ENCODE measurements at regions of chr3 and their contacts with region 1.

Region 1: GRCh38 chr3:39279745-39280517 is at the start of gene CX3CR1:
- DNase-seq: peak in 1 of 2 donors; percentile 33
- ATAC-seq: peak; percentile 39 to 72 (median 60)
- H3K4me3 ChIP-seq: peak within 1 kb of the TSS; percentile 68
- H3K4me3 Mint-ChIP-seq: peak within 1 kb of the TSS; percentile 98
- H3K27ac ChIP-seq: peak within 1 kb of the TSS; percentile 69
- H3K27ac Mint-ChIP-seq: peak within 1 kb of the TSS; percentile 91 to 92
- H3K4me1 ChIP-seq: peaks cover 66% of the 10 kb centered on the region
- H3K4me1 Mint-ChIP-seq: peaks cover 84% of the 10 kb centered on the region in 2 donors
- H3K27me3 ChIP-seq: no peaks in the 10 kb centered on the region
- H3K27me3 Mint-ChIP-seq: no peaks in the 10 kb centered on the region
- CTCF ChIP-seq: no peak
- total RNA-seq, gene CX3CR1: 203 to 459 (median 405) TPM

Region 2: DNA sequence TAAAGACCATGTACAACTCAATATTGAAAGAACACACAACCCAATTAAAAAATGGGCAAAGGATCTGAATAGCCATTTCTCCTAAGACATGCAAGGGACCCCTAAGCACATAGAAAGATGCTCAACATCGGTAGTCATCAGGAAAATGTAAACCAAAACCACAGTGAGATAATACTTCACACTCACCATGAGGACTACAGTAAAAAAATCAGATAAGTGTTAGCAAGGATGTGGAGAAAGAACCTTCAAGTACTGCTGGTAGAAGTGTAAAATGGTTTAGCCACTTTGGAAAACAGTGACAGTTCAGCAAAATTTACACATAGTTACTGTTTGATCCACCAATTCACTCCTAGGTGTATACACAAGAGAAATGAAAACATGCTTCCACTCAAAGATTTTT is 57.5 kb before region 1 on chr3:
- intact Hi-C with region 1: loop called (anchors 2 kb)
- DNase-seq: peak in 1 of 2 donors; percentile 48
- ATAC-seq: peak; percentile 71 to 88 (median 85)
- H3K4me3 ChIP-seq: no peak overlapping the region
- H3K4me3 Mint-ChIP-seq: peak overlapping the region; percentile 89
- H3K27ac ChIP-seq: peak overlapping the region; percentile 47
- H3K27ac Mint-ChIP-seq: peak overlapping the region; percentile 86 to 89
- H3K4me1 ChIP-seq: peaks cover 32% of the 10 kb centered on the region
- H3K4me1 Mint-ChIP-seq: peaks cover 78 to 84% of the 10 kb centered on the region in 2 donors
- H3K27me3 ChIP-seq: no peaks in the 10 kb centered on the region
- H3K27me3 Mint-ChIP-seq: no peaks in the 10 kb centered on the region
- CTCF ChIP-seq: no peak

Region 3: DNA sequence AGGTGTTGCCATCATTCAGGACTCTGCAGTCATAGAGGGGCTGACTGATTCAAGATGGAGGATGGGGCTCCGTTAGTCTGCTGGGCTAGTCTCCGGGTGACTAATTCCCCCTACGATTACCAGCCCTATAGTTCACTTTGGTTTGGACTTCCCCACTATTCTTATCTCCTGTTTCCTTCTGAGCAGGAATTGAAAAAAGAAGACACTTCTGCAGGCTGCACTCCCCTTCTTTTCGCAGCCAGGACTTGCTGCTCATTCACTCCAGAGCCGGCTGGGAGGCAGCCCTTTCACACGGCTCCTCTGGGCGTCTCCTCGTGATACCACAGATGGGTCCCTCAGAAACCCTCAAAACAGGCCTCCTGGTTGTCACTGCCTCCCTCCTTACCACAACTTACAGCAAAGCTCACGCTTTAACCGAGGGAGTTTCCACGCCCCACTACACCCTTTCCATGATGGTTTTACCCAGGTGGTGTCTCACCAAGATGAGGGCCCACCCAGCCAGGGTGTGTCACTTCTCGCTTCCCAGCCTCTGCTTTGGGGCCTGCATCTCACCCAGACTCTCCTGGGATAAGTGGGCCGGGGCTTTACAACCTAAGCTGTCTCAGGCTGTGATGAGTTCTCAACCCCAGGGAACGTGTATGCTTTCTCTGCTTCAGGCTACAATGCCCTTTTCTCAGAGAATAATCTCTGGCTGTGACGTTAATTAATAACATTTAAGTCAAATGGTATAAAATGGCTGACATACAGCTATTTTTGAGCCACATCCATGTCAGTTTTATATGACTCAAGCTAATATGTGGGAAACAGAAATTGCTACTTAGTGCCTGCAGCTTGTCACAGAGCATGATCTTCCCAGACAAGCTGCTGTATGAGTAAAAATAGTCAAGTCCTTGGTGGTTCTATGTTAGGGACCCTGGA is 12.0 kb before region 1 on chr3:
- intact Hi-C with region 1: loop called (anchors 1 kb)
- DNase-seq: peak; percentile 83 to 91
- ATAC-seq: peak; percentile 69 to 89 (median 88)
- H3K4me3 ChIP-seq: no peak overlapping the region
- H3K4me3 Mint-ChIP-seq: peak overlapping the region; percentile 81
- H3K27ac ChIP-seq: peak overlapping the region; percentile 90
- H3K27ac Mint-ChIP-seq: peak overlapping the region; percentile 91 to 92
- H3K4me1 ChIP-seq: peaks cover 86% of the 10 kb centered on the region
- H3K4me1 Mint-ChIP-seq: peaks cover 95 to 98% of the 10 kb centered on the region in 2 donors
- H3K27me3 ChIP-seq: no peaks in the 10 kb centered on the region
- H3K27me3 Mint-ChIP-seq: no peaks in the 10 kb centered on the region
- CTCF ChIP-seq: no peak

Region 4: GRCh38 chr3:39327746-39328349 is 47.9 kb after region 1 on chr3:
- intact Hi-C with region 1: no loop called
- DNase-seq: peak in 1 of 2 donors; percentile 55
- ATAC-seq: no peak
- H3K4me3 ChIP-seq: no peak overlapping the region
- H3K4me3 Mint-ChIP-seq: no peak overlapping the region
- H3K27ac ChIP-seq: no peak overlapping the region
- H3K27ac Mint-ChIP-seq: no peak overlapping the region
- H3K4me1 ChIP-seq: peaks cover 12% of the 10 kb centered on the region
- H3K4me1 Mint-ChIP-seq: peaks cover 12 to 24% of the 10 kb centered on the region in 2 donors
- H3K27me3 ChIP-seq: no peaks in the 10 kb centered on the region
- H3K27me3 Mint-ChIP-seq: no peaks in the 10 kb centered on the region
- CTCF ChIP-seq: no peak

Region 5: GRCh38 chr3:39361252-39361927 is 81.5 kb after region 1 on chr3:
- intact Hi-C with region 1: no loop called
- DNase-seq: peak; percentile 46 to 72
- ATAC-seq: peak; percentile 83 to 93 (median 90)
- H3K4me3 ChIP-seq: peak overlapping the region; percentile 19
- H3K4me3 Mint-ChIP-seq: peak overlapping the region; percentile 78
- H3K27ac ChIP-seq: peak overlapping the region; percentile 90
- H3K27ac Mint-ChIP-seq: peak overlapping the region; percentile 69 to 90
- H3K4me1 ChIP-seq: peaks cover 45% of the 10 kb centered on the region
- H3K4me1 Mint-ChIP-seq: peaks cover 51 to 68% of the 10 kb centered on the region in 2 donors
- H3K27me3 ChIP-seq: no peaks in the 10 kb centered on the region
- H3K27me3 Mint-ChIP-seq: no peaks in the 10 kb centered on the region
- CTCF ChIP-seq: no peak

Region 6: DNA sequence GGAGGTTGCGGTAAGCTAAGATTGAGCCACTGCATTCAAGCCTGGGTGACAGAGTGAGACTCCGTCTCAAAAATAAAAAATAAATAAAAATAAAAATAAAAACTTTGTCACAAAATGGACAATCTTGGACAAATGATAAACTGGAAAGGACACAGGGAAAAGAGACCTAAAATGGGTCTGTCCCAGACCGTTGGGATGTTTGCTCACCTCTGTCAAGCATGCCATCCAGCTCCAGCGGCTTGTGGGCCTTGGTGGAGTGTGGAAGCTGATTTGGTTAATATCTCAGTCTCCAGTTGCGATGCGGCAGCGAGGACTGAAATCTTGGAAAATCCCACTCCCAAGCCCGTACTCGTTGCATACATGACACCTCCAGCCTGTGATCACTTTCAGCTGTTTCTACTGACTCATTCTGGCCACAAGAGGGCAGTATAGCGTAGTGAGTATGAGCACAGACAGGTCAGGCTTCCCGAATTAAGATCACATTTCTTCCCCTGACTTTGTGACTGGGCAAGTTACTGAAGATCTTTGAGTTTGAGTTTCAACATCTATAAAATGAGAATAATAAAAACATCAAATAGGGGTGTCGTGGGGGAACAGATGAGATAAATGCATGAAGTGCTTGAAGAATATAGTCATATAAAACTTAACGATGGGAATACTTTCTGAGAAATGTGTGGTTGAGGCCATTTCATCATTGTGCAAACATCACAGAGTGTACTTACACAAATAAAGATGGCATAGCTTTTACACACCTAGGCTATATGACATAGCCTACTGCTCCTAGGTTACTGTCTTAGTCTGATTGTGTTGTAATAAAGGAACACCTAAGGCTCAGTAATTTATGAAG is 167.9 kb after region 1 on chr3:
- intact Hi-C with region 1: no loop called
- DNase-seq: peak; percentile 17 to 88
- ATAC-seq: peak; percentile 82 to 96 (median 83)
- H3K4me3 ChIP-seq: no peak overlapping the region
- H3K4me3 Mint-ChIP-seq: no peak overlapping the region
- H3K27ac ChIP-seq: no peak overlapping the region
- H3K27ac Mint-ChIP-seq: no peak overlapping the region
- H3K4me1 ChIP-seq: peaks cover 3% of the 10 kb centered on the region
- H3K4me1 Mint-ChIP-seq: peaks cover 0 to 4% of the 10 kb centered on the region in 2 donors
- H3K27me3 ChIP-seq: no peaks in the 10 kb centered on the region
- H3K27me3 Mint-ChIP-seq: peaks cover 3 to 19% of the 10 kb centered on the region in 2 donors
- CTCF ChIP-seq: peak; percentile 91